ENCODE measurements at regions of chr15 and their contacts with region 1.

Region 1: GRCh38 chr15:72599855-72600464 is 54.5 kb upstream of the GOLGA6B start:
- DNase-seq: peak; percentile 69
- ATAC-seq: peak; percentile 74 to 86; a peak in 5 of 6 replicates
- H3K4me3 ChIP-seq: no peak overlapping the region
- H3K27ac ChIP-seq: no peak overlapping the region
- H3K4me1 ChIP-seq: no peaks in the 10 kb centered on the region
- CTCF ChIP-seq: peak; percentile 86
- EP300 ChIP-seq: no peak
- POLR2A ChIP-seq: no peak
- RAD21 ChIP-seq: peak; percentile 74 to 76

Region 2: DNA sequence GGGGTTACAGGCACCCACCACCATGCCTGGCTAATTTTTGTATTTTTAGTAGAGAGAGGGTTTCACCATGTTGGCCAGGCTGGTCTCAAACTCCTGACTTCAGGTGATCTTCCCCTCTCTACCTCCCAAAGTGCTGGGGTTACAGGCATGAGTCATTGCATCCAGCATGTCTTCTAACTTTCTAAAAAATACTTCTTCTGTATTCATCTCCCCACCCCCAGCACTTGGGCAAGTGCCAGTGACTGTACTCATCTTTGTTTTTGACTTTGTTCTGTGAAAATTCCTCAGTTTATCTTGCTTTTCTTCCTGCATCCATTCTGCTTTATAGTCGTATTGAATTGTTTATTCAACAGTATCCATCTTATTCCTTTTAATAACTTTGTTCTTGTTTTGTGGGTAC is 78.3 kb before region 1 on chr15:
- CTCF ChIA-PET with region 1: no interaction called
- POLR2A ChIA-PET with region 1: no interaction called
- DNase-seq: no peak
- ATAC-seq: no peak
- H3K4me3 ChIP-seq: no peak overlapping the region
- H3K27ac ChIP-seq: no peak overlapping the region
- H3K4me1 ChIP-seq: peaks cover 6% of the 10 kb centered on the region; the same call in 2 of the 3 replicates
- CTCF ChIP-seq: no peak
- EP300 ChIP-seq: no peak
- POLR2A ChIP-seq: no peak
- RAD21 ChIP-seq: no peak

Region 3: GRCh38 chr15:72585476-72586082 is 14.4 kb before region 1 on chr15:
- CTCF ChIA-PET with region 1: interaction called, 48 read pairs
- POLR2A ChIA-PET with region 1: no interaction called
- DNase-seq: peak in 1 of 2 experiments; percentile 54
- ATAC-seq: peak; percentile 57 to 71; a peak in 3 of 6 replicates
- H3K4me3 ChIP-seq: no peak overlapping the region
- H3K27ac ChIP-seq: no peak overlapping the region
- H3K4me1 ChIP-seq: no peaks in the 10 kb centered on the region
- CTCF ChIP-seq: no peak; the same call in 2 of the 3 replicates
- EP300 ChIP-seq: no peak
- POLR2A ChIP-seq: no peak
- RAD21 ChIP-seq: peak in 1 of 2 experiments; percentile 52; a peak in 3 of 5 replicates

Region 4: DNA sequence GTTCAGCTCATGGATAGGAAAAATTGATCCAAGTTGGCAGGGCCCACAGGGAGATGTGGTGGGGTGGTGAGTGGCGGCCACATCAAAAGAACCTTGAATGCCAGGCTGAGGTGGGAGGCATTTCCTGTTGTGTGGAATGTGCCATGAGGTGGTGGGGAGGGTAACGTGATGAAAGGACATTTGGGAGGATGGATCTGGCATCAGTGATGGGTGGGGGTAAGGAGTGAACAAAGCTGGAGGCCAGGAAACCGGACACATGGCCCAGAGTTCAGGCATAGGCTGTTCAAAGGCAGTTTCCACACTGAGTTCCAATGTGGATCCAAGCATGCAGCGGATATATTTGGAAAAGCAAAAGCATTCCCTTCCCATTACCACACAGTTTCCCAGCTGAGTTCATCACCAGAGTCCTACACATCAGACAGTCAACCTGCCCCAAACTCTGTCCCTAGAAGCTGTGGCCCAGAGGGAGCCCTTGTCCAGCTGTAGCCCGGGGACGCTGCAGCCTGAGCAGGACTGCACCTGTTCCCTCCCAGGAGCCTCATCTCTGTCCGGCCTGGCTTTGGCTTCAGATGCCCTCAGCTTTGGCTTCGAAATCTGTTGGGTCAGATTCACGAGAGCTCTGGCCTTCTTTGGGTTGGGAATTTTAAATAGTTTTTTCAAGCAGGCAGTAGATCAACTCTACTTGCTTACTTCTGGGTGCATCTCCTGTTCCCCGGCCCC is 16.7 kb after region 1 on chr15:
- CTCF ChIA-PET with region 1: interaction called, 43 read pairs
- POLR2A ChIA-PET with region 1: interaction called, 3 read pairs
- DNase-seq: no peak
- ATAC-seq: no peak
- H3K4me3 ChIP-seq: no peak overlapping the region
- H3K27ac ChIP-seq: no peak overlapping the region
- H3K4me1 ChIP-seq: no peaks in the 10 kb centered on the region
- CTCF ChIP-seq: no peak
- EP300 ChIP-seq: no peak
- POLR2A ChIP-seq: no peak
- RAD21 ChIP-seq: no peak

Region 5: GRCh38 chr15:72671535-72671934 is 71.6 kb after region 1 on chr15:
- CTCF ChIA-PET with region 1: interaction called, 53 read pairs
- POLR2A ChIA-PET with region 1: no interaction called
- DNase-seq: no peak
- ATAC-seq: no peak
- H3K4me3 ChIP-seq: no peak overlapping the region
- H3K27ac ChIP-seq: no peak overlapping the region; a peak in 1 of 6 replicates
- H3K4me1 ChIP-seq: peaks cover 6% of the 10 kb centered on the region
- CTCF ChIP-seq: no peak
- EP300 ChIP-seq: no peak
- POLR2A ChIP-seq: no peak
- RAD21 ChIP-seq: no peak

Region 6: GRCh38 chr15:72676838-72677237 is 76.9 kb after region 1 on chr15:
- CTCF ChIA-PET with region 1: interaction called, 53 read pairs
- POLR2A ChIA-PET with region 1: no interaction called
- DNase-seq: no peak
- ATAC-seq: no peak
- H3K4me3 ChIP-seq: no peak overlapping the region
- H3K27ac ChIP-seq: no peak overlapping the region
- H3K4me1 ChIP-seq: no peaks in the 10 kb centered on the region
- CTCF ChIP-seq: no peak
- EP300 ChIP-seq: no peak
- POLR2A ChIP-seq: no peak
- RAD21 ChIP-seq: no peak